Naive thymus-derived CD4-positive, alpha-beta T cell (primary cell): ENCODE measurements at regions of chr3 and their contacts with region 1.

Region 1: GRCh38 chr3:67654099-67654843 is at the start of gene SUCLG2:
- DNase-seq: peak; percentile 64 to 83 (median 77)
- ATAC-seq: peak; percentile 87
- H3K4me3 ChIP-seq: peak within 1 kb of the TSS; percentile 82
- H3K4me3 Mint-ChIP-seq: peak within 1 kb of the TSS; percentile 81 to 94 (median 90)
- H3K27ac ChIP-seq: peak within 1 kb of the TSS; percentile 87
- H3K27ac Mint-ChIP-seq: peak within 1 kb of the TSS; percentile 90 to 98 (median 93)
- H3K4me1 ChIP-seq: peaks cover 33 to 49% of the 10 kb centered on the region in 2 donors
- H3K4me1 Mint-ChIP-seq: peaks cover 45 to 77% (median 69%) of the 10 kb centered on the region in 7 donors
- H3K27me3 ChIP-seq: no peaks in the 10 kb centered on the region
- H3K27me3 Mint-ChIP-seq: no peaks in the 10 kb centered on the region
- total RNA-seq, gene SUCLG2: 49.7 to 75.9 (median 61.4) TPM

Region 2: GRCh38 chr3:66206806-66207205 is 1447.5 kb before region 1 on chr3:
- CTCF ChIA-PET with region 1: no interaction called
- POLR2A ChIA-PET with region 1: no interaction called
- intact Hi-C with region 1: no loop called
- DNase-seq: no peak
- ATAC-seq: no peak
- H3K4me3 ChIP-seq: no peak overlapping the region
- H3K4me3 Mint-ChIP-seq: no peak overlapping the region
- H3K27ac ChIP-seq: no peak overlapping the region
- H3K27ac Mint-ChIP-seq: no peak overlapping the region
- H3K4me1 ChIP-seq: no peaks in the 10 kb centered on the region
- H3K4me1 Mint-ChIP-seq: no peaks in the 10 kb centered on the region
- H3K27me3 ChIP-seq: peaks cover 0 to 3% of the 10 kb centered on the region in 2 donors
- H3K27me3 Mint-ChIP-seq: peaks cover 3 to 14% (median 9%) of the 10 kb centered on the region in 5 donors

Region 3: GRCh38 chr3:66998113-66998903 is 656.0 kb before region 1 on chr3 and contains the start of gene KBTBD8:
- CTCF ChIA-PET with region 1: no interaction called
- POLR2A ChIA-PET with region 1: interaction called, 3 read pairs
- intact Hi-C with region 1: loop called (anchors 1 to 2 kb)
- DNase-seq: peak; percentile 87 to 99 (median 98)
- ATAC-seq: peak; percentile 97
- H3K4me3 ChIP-seq: peak within 1 kb of the TSS; percentile 69
- H3K4me3 Mint-ChIP-seq: peak within 1 kb of the TSS; percentile 85 to 99 (median 96)
- H3K27ac ChIP-seq: peak within 1 kb of the TSS; percentile 75
- H3K27ac Mint-ChIP-seq: peak within 1 kb of the TSS; percentile 68 to 96 (median 93)
- H3K4me1 ChIP-seq: peaks cover 7 to 19% of the 10 kb centered on the region in 2 donors
- H3K4me1 Mint-ChIP-seq: peaks cover 4 to 39% (median 27%) of the 10 kb centered on the region in 7 donors
- H3K27me3 ChIP-seq: no peaks in the 10 kb centered on the region
- H3K27me3 Mint-ChIP-seq: peaks cover 10 to 33% (median 27%) of the 10 kb centered on the region in 5 donors
- total RNA-seq, gene KBTBD8: 4.5 to 14.6 (median 9.5) TPM

Region 4: DNA sequence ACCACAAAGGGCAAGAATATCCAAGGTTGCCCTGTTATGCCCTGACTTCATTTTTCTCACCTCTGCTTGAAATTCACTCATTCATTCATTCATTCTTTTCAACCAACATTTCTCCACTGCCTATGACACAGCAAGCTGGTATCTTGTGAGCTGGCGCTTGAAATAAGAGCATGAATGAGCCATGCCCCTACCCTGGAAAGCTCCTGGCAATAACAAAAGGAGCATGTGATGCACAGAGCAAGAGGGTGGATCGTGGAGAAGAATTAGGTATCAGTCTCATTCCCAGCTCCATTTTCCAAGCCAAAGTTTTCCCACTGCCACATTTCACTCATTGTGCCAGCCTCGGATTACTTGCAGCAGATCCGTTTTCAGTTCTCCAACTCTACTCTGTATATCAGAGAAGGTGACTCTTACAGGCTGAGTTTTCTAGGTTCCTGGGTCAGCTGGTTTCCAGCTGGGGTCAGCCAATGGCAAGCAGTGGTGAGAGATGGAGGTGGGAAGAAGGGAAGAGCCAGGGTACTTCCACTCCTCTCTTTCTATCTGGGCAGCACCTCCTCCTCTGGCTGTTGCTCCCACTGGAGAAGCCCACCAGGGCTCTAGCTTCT is 144.7 kb before region 1 on chr3:
- CTCF ChIA-PET with region 1: no interaction called
- POLR2A ChIA-PET with region 1: no interaction called
- intact Hi-C with region 1: no loop called
- DNase-seq: no peak
- ATAC-seq: no peak
- H3K4me3 ChIP-seq: no peak overlapping the region
- H3K4me3 Mint-ChIP-seq: no peak overlapping the region
- H3K27ac ChIP-seq: no peak overlapping the region
- H3K27ac Mint-ChIP-seq: no peak overlapping the region
- H3K4me1 ChIP-seq: no peaks in the 10 kb centered on the region
- H3K4me1 Mint-ChIP-seq: peaks cover 0 to 6% (median 0%) of the 10 kb centered on the region in 7 donors
- H3K27me3 ChIP-seq: no peaks in the 10 kb centered on the region
- H3K27me3 Mint-ChIP-seq: no peaks in the 10 kb centered on the region

Region 5: DNA sequence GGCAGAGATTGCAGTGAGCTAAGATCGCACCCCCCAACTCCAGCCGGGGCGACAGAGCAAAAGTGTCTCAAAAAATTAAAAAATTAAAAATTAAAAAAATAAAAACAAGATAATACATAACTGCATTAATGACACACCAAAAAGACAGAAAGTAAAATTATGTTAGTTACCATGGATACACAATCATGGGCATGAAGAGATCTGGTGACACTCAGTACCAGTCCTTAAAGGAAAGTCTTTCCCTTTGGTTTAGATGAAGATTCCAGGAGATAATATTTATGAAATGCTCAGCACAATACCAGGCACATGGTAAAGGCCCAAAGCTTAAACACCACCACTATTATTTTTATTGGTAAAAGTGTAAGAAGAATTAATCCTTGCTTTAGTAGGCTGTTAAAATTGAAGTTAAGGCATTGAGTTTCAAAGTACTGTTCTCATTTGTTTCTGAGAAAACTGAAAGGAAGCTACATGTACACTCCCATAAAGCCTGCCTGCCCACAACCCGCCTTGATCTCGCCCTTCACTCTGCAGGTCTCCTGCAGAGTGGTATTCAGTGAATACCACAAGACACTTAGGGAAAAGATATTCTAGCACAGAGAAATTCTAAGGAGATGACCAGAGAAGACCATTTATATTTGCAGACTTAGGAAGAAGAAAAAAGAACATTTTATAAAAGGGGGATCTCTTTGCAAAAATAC is 52.2 kb before region 1 on chr3:
- CTCF ChIA-PET with region 1: no interaction called
- POLR2A ChIA-PET with region 1: interaction called, 6 read pairs
- intact Hi-C with region 1: loop called (anchors 2 kb)
- DNase-seq: peak in 6 of 9 donors; percentile 8 to 31 (median 16)
- ATAC-seq: peak; percentile 72
- H3K4me3 ChIP-seq: peak overlapping the region; percentile 5
- H3K4me3 Mint-ChIP-seq: peak overlapping the region; percentile 65 to 90 (median 77)
- H3K27ac ChIP-seq: peak overlapping the region; percentile 66
- H3K27ac Mint-ChIP-seq: peak overlapping the region; percentile 56 to 95 (median 81)
- H3K4me1 ChIP-seq: peaks cover 30 to 69% of the 10 kb centered on the region in 2 donors
- H3K4me1 Mint-ChIP-seq: peaks cover 48 to 93% (median 86%) of the 10 kb centered on the region in 7 donors
- H3K27me3 ChIP-seq: no peaks in the 10 kb centered on the region
- H3K27me3 Mint-ChIP-seq: no peaks in the 10 kb centered on the region

Region 6: DNA sequence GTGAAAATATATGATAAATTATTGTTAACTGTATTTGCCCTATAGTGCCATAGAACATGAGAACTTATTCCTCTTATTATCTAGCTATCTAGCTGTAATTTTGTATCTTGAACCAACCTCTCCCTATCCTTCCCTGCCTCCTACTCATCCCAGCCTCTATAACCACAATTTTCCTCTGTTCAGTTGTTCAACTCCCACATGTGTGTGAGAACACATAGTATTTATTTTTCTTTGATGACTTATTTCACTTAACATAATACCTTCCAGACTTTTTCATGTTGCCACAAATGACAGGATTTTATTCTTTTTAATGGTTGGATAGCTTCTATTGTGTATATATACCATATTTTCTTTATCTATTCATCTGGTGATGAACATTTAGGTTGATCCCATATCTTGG is 85.6 kb after region 1 on chr3:
- CTCF ChIA-PET with region 1: interaction called, 14 read pairs
- POLR2A ChIA-PET with region 1: interaction called, 59 read pairs
- intact Hi-C with region 1: loop called in 1 of 2 experiments (anchors 1 kb)
- DNase-seq: no peak
- ATAC-seq: no peak
- H3K4me3 ChIP-seq: no peak overlapping the region
- H3K4me3 Mint-ChIP-seq: peak overlapping the region in 7 of 10 donors; percentile 4 to 72 (median 32)
- H3K27ac ChIP-seq: peak overlapping the region; percentile 62
- H3K27ac Mint-ChIP-seq: peak overlapping the region in 8 of 9 donors; percentile 79 to 98 (median 95)
- H3K4me1 ChIP-seq: peaks cover 6 to 63% of the 10 kb centered on the region in 2 donors
- H3K4me1 Mint-ChIP-seq: peaks cover 15 to 95% (median 90%) of the 10 kb centered on the region in 7 donors
- H3K27me3 ChIP-seq: no peaks in the 10 kb centered on the region
- H3K27me3 Mint-ChIP-seq: no peaks in the 10 kb centered on the region

Region 7: GRCh38 chr3:67819447-67819846 is 165.2 kb after region 1 on chr3:
- CTCF ChIA-PET with region 1: no interaction called
- POLR2A ChIA-PET with region 1: no interaction called
- intact Hi-C with region 1: no loop called
- DNase-seq: peak in 5 of 9 donors; percentile 10 to 27 (median 21)
- ATAC-seq: no peak
- H3K4me3 ChIP-seq: no peak overlapping the region
- H3K4me3 Mint-ChIP-seq: no peak overlapping the region
- H3K27ac ChIP-seq: no peak overlapping the region
- H3K27ac Mint-ChIP-seq: peak overlapping the region in 1 of 9 donors; percentile 3
- H3K4me1 ChIP-seq: no peaks in the 10 kb centered on the region
- H3K4me1 Mint-ChIP-seq: peaks cover 0 to 10% (median 0%) of the 10 kb centered on the region in 7 donors
- H3K27me3 ChIP-seq: no peaks in the 10 kb centered on the region
- H3K27me3 Mint-ChIP-seq: no peaks in the 10 kb centered on the region

Region 8: DNA sequence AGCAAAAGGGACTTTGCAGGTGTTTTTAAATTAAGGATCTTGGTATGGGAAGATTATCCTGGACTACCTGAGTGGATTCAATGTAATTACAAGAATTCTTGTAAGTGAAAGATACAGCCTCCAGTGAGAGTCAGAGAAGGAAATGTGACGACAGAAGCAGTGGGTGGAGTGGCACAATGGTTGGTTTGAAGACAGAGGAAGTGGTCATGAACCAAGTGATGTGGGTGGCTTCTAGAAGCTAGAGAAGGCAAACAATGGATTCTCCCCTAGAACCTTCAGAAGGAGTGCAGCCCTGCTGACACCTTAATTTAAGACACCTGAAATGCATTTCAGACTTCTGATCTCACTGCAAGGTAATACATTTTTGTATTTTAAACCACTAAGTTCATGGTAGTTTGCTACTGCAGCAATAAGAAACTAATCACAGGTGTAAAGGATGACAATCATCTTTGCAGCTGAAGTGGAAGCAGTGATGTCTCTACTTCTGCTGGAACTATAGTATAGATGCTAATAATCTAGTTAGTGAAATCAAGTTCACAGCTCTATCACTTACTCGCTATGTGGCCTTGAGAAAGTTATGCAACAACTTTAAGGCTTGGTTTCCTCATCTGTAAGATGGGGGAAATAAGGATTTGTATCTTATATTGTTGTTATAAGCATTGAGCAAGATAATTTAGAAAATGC is 403.5 kb after region 1 on chr3:
- CTCF ChIA-PET with region 1: no interaction called
- POLR2A ChIA-PET with region 1: interaction called, 4 read pairs
- intact Hi-C with region 1: loop called (anchors 1 to 2 kb)
- DNase-seq: peak; percentile 16 to 94 (median 91)
- ATAC-seq: peak; percentile 99
- H3K4me3 ChIP-seq: peak overlapping the region; percentile 27
- H3K4me3 Mint-ChIP-seq: peak overlapping the region; percentile 33 to 85 (median 68)
- H3K27ac ChIP-seq: peak overlapping the region; percentile 62
- H3K27ac Mint-ChIP-seq: peak overlapping the region; percentile 57 to 93 (median 83)
- H3K4me1 ChIP-seq: peaks cover 11 to 54% of the 10 kb centered on the region in 2 donors
- H3K4me1 Mint-ChIP-seq: peaks cover 30 to 87% (median 82%) of the 10 kb centered on the region in 7 donors
- H3K27me3 ChIP-seq: no peaks in the 10 kb centered on the region
- H3K27me3 Mint-ChIP-seq: no peaks in the 10 kb centered on the region